Sciatic nerve (tissue), 2 donors: ENCODE measurements at regions of chr6 and their contacts with region 1.

Region 1: GRCh38 chr6:111997078-111997852 is 56.6 kb upstream of the CCN6 start:
- DNase-seq: peak; percentile 90
- ATAC-seq: peak; percentile 94

Region 2: GRCh38 chr6:111483736-111484632 is 513.3 kb before region 1 on chr6:
- intact Hi-C with region 1: no loop called
- DNase-seq: peak; percentile 95
- ATAC-seq: peak; percentile 94

Region 3: DNA sequence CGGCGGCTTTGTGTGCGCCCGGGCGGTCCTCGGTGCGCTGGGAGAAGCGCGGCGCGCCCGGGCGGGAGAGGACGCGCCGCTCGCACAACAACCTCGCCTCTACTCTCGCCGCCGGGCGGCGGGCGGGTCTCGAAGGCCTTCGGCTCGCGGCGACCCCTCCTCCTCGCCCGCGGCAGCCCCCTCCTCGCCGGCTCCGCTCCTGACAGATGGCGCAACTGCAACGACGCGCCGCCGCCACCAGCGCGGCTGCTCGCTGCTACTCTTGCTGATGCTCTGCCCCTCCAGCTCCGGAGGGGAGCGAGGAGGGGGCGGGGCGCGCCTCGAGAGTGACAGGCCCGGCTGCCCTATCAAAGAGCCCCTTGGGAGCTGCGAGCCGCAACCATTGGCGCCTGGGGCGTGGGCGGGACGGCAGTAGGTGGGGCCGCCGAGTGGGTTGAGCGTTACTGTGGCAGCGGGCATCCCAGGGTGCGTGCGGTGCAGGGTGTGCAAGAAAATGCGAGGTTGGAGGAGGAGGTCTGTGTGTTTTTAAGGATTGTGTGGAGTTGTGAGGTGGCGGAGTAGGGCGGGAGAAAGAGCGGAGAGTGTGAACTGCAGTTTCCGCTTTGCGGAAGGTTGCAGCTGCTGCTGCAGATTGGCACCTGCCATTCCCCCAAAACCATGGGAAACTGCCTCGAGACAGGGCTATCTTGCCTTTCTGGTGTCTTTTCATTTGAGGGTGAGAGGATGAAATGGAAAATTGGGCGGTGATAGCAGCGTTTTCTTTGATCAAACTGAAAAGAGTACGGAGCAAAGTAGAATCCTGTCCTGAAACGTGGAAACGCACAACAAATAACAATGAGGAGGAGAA is 123.9 kb before region 1 on chr6 and contains the start of gene FYN:
- intact Hi-C with region 1: loop called (anchors 10 kb)
- DNase-seq: peak; percentile 99
- ATAC-seq: peak; percentile 99
- total RNA-seq, gene FYN: 173 TPM

Region 4: DNA sequence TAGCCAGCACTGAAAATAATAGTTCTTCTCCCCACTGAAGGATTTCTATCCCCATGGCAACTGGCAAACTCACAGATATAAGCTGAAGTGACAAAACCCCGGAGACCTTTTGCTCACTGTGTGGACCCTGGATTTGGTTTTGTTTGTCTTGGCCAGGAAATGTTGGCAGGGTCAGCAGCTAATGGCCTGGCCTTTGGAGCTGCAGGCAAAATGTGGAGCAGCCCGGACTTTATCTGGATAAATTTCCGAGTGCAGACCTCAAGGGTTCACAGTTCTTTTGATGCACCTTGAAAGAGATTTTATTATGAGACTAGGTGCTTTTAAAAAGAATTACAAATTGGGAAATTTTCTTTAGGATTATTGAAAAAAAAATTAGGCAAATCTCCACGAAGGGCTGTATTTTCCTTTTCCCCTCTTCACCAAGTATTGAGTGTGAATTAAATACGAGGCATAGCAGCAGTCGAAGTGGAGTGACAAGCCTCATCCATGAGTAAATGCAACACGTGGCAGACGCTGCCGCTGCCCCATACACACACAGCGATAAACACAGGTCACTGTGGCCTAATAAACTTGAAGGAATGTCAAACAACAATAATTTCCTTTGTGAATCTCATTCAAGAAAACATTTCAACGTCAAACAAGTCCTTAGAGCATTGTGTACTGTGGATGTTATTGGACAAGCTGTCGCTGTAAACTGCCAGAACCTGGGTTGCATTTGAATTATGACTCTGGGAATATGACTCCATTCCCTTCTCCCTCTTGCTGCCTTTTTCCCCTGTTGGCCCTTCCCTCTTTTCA is 21.6 kb after region 1 on chr6:
- intact Hi-C with region 1: loop called (anchors 1 kb)
- DNase-seq: no peak
- ATAC-seq: peak; percentile 85

Region 5: GRCh38 chr6:112043032-112044007 is 46.1 kb after region 1 on chr6:
- intact Hi-C with region 1: loop called (anchors 5 kb)
- DNase-seq: peak; percentile 95
- ATAC-seq: peak; percentile 96